ENCODE measurements at regions of chr1 and their contacts with region 1.

Region 1: GRCh38 chr1:202315576-202316168 is 26.1 kb downstream of the UBE2T start:
- DNase-seq: peak; percentile 87 to 93
- H3K4me3 ChIP-seq: no peak overlapping the region
- H3K27ac ChIP-seq: no peak overlapping the region
- H3K4me1 ChIP-seq: no peaks in the 10 kb centered on the region
- H3K27me3 ChIP-seq: peaks cover 0 to 18% (median 0%) of the 10 kb centered on the region in 3 donors
- CTCF ChIP-seq: peak in 5 of 7 experiments; percentile 77 to 89 (median 86)
- EP300 ChIP-seq: no peak
- POLR2A ChIP-seq: no peak

Region 2: DNA sequence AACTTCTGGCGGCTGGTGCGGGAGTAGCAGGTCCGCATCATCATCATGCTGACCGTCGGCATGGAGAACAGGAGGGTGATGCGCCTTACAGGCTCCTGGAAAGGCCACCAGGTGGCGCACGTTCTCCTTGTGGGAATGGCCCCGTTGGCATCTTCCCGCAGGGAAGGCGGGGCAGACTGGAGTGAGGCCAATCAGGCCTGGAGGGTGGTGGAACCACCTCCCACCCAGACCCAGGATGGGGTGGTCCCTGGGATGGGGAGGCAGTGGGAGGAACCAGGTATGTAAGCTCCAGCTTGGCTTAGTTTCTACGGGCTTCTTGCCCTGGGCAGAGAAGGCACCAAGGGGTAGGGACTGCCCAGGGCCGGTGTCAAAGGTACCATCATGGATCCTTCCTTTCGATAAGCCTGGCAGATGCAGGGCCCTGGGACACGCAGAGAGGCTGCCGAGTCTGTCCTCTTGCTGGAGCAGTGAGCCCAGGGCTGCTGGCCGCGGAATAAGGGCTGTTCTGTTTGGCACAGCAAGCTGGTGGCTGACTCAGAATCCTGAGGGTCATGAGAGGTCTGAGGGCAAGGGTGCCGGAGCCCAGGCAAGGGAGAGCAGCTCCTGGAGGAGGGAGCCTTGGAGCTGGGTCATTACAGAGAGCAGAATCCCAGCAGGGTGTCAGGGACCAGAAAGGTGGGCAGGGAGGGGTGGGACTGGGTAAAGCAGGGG is 130.8 kb before region 1 on chr1:
- intact Hi-C with region 1: loop called (anchors 5 kb)
- DNase-seq: peak; percentile 87 to 91
- H3K4me3 ChIP-seq: no peak overlapping the region
- H3K27ac ChIP-seq: no peak overlapping the region
- H3K4me1 ChIP-seq: peaks cover 0 to 9% (median 6%) of the 10 kb centered on the region in 4 donors
- H3K27me3 ChIP-seq: peaks cover 0 to 83% (median 0%) of the 10 kb centered on the region in 3 donors
- CTCF ChIP-seq: peak in 5 of 7 experiments; percentile 19 to 85 (median 71)
- EP300 ChIP-seq: no peak
- POLR2A ChIP-seq: no peak

Region 3: DNA sequence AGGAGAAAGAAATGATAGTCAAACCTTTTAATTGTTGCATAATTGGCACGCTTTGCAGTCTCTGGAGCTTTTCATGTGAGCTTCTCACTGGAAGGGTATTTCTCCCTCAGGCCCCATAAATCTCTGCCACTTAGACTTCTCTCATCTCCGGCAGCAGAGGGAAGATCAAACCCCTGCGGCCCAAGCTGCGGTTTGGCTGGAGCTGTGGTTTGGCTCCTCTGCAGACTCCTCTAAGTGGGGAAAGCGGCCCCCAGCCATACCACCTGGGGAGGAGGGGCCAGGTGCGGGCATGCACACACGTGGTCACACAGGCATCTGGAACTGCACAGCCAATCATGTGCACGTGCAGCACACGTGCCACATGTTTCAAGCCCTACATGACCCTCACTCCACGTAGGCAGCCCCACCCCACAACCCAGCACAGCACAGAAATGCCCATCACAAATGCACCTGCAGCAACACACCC is 32.3 kb before region 1 on chr1:
- intact Hi-C with region 1: no loop called
- DNase-seq: peak in 1 of 2 donors; percentile 55
- H3K4me3 ChIP-seq: no peak overlapping the region
- H3K27ac ChIP-seq: no peak overlapping the region
- H3K4me1 ChIP-seq: peaks cover 0 to 7% (median 0%) of the 10 kb centered on the region in 4 donors
- H3K27me3 ChIP-seq: no peaks in the 10 kb centered on the region
- CTCF ChIP-seq: no peak
- EP300 ChIP-seq: no peak
- POLR2A ChIP-seq: no peak

Region 4: GRCh38 chr1:202625416-202626360 is 310.0 kb after region 1 on chr1:
- intact Hi-C with region 1: no loop called
- DNase-seq: peak; percentile 74 to 88
- H3K4me3 ChIP-seq: no peak overlapping the region
- H3K27ac ChIP-seq: no peak overlapping the region
- H3K4me1 ChIP-seq: peaks cover 0 to 30% (median 12%) of the 10 kb centered on the region in 4 donors
- H3K27me3 ChIP-seq: peaks cover 0 to 56% (median 0%) of the 10 kb centered on the region in 3 donors
- CTCF ChIP-seq: peak in 5 of 7 experiments; percentile 27 to 72 (median 60)
- EP300 ChIP-seq: no peak
- POLR2A ChIP-seq: no peak

Region 5: DNA sequence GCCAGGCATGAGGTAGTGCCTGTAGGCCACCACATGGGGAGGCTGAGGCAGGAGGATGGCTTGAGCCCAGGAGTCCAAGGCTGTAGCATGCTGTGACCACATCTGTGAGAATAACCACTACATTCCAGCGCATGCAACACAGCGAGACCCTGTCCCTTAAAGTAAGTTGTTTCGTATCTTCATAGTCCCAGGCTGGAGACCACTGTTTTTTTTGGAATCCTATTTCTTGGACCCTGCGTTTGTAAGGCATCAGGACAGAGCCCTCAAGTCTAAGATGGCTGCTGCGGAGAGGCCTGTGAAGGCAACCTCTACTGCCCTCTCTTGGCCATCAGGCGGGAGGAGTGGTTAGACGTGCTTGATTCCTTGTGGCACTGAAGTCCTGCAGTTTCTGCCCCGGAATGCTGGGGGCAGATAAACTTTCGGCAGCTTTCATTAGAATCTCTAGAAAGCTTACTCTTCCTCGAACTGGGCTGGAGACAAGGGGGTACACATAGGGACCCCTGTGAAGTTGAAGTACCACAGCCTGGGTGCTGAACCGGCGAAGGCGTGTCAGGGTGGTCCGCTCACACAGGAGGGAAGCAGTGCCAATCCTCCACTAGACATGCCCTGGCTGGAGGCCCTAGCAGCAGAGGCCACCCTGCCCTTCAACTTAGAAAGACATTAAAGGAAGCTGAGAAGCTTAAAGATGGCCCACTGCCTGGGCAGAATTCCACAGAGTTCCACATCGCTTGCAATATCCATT is 536.7 kb after region 1 on chr1:
- intact Hi-C with region 1: no loop called
- DNase-seq: peak; percentile 63 to 79
- H3K4me3 ChIP-seq: no peak overlapping the region
- H3K27ac ChIP-seq: no peak overlapping the region
- H3K4me1 ChIP-seq: no peaks in the 10 kb centered on the region
- H3K27me3 ChIP-seq: no peaks in the 10 kb centered on the region
- CTCF ChIP-seq: peak in 4 of 7 experiments; percentile 13 to 51 (median 39)
- EP300 ChIP-seq: no peak
- POLR2A ChIP-seq: no peak

Region 6: DNA sequence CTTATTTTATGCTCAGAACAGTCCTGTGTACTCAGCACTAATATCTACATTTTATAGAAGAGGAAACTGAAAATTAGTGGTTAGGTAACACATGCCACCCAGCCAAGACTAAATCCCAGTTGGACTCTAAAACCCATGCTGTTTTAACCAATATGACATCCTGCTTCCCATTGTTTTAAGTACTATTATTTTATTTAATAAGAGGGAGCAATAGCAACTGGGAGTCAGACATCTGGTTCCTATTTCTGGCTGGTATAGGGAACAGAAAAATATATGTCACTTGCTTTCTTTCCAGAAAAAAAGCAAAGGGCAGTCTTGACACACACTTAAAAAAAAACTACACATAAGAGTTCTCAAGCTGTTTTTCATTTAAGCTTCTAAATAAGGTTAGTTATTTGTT is 599.5 kb after region 1 on chr1:
- intact Hi-C with region 1: no loop called
- DNase-seq: no peak
- H3K4me3 ChIP-seq: no peak overlapping the region
- H3K27ac ChIP-seq: no peak overlapping the region
- H3K4me1 ChIP-seq: no peaks in the 10 kb centered on the region
- H3K27me3 ChIP-seq: no peaks in the 10 kb centered on the region
- CTCF ChIP-seq: no peak
- EP300 ChIP-seq: no peak
- POLR2A ChIP-seq: no peak

Measured in stomach (tissue), 19 donors.